ENCODE measurements at regions of chr4 and their contacts with region 1.

Region 1: DNA sequence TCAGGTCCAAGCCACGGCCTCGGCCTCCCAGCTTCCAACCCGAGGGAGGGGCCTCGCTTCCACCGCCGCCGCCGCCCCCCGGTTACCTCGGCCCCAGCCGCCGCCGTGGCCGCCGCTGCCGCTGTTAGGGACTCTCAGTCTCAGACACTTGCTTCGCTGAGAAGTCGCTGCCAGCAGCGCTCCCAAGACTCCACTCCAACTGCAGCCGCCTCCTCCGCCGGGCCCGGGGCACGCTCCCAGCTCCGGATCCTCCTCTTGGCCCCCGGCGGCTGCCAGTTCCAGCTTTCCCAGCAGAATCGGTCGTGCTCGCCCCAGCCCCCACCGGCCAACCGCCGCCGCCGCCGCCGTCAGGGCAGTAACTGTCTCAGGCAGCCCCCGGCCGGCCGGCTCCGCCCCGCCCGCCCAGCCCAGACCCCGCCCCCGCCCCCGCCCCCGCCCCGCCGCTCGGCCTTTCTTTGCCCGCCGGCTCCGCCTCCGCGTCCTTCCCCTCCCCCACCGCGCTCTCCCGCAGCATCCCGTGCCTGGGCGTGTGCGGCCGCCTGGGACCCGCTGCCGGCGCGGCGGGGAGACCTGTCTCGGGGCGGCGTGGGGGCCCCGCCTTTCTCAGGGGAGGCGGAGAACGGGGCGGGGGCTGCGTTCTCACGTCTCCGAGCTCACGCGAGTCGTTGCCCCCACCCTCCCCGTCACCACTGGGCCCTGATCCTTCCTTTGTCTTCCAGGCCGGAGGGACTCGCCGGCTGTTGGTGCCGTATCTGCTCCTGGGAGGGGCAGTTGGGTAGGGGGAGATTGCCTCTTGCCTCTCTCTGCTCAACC is at the start of gene ANKRD50:
- DNase-seq: peak; percentile 88
- H3K4me3 Mint-ChIP-seq: no peak within 1 kb of the TSS
- H3K27ac Mint-ChIP-seq: peak within 1 kb of the TSS; percentile 97
- H3K4me1 Mint-ChIP-seq: no peaks in the 10 kb centered on the region
- H3K27me3 Mint-ChIP-seq: no peaks in the 10 kb centered on the region
- CTCF ChIP-seq: no peak
- total RNA-seq, gene ANKRD50: 22.9 and 24.3 TPM in 2 replicates

Region 2: GRCh38 chr4:124427095-124427767 is 285.3 kb before region 1 on chr4:
- CTCF ChIA-PET with region 1: no interaction called
- intact Hi-C with region 1: loop called (anchors 10 kb)
- DNase-seq: peak; percentile 8
- H3K4me3 Mint-ChIP-seq: no peak overlapping the region
- H3K27ac Mint-ChIP-seq: peak overlapping the region; percentile 60
- H3K4me1 Mint-ChIP-seq: peaks cover 47% of the 10 kb centered on the region
- H3K27me3 Mint-ChIP-seq: no peaks in the 10 kb centered on the region
- CTCF ChIP-seq: no peak

Region 3: DNA sequence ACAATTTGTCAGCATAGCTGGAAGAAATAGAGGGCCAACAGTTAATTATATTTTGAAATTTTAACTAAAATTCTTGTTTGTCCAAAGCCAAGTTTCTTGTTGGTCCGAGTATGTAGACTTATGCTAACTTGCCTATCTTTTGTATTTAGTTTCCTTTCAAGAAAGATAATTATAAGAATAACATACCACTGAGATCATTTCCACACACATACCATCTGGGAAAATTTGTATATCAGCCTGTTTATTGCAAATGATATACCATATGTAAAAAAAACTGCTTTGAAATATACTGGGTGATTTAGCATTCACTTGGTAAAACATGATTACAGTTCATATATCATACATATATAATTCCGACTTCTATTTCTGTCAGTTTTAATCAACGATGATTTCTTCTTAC is 84.6 kb after region 1 on chr4:
- CTCF ChIA-PET with region 1: no interaction called
- intact Hi-C with region 1: no loop called
- DNase-seq: no peak
- H3K4me3 Mint-ChIP-seq: no peak overlapping the region
- H3K27ac Mint-ChIP-seq: no peak overlapping the region
- H3K4me1 Mint-ChIP-seq: no peaks in the 10 kb centered on the region
- H3K27me3 Mint-ChIP-seq: no peaks in the 10 kb centered on the region
- CTCF ChIP-seq: no peak

Region 4: GRCh38 chr4:124980276-124980752 is 267.7 kb after region 1 on chr4:
- CTCF ChIA-PET with region 1: no interaction called
- intact Hi-C with region 1: no loop called
- DNase-seq: no peak
- H3K4me3 Mint-ChIP-seq: no peak overlapping the region
- H3K27ac Mint-ChIP-seq: no peak overlapping the region
- H3K4me1 Mint-ChIP-seq: peaks cover 13% of the 10 kb centered on the region
- H3K27me3 Mint-ChIP-seq: no peaks in the 10 kb centered on the region
- CTCF ChIP-seq: no peak

Region 5: DNA sequence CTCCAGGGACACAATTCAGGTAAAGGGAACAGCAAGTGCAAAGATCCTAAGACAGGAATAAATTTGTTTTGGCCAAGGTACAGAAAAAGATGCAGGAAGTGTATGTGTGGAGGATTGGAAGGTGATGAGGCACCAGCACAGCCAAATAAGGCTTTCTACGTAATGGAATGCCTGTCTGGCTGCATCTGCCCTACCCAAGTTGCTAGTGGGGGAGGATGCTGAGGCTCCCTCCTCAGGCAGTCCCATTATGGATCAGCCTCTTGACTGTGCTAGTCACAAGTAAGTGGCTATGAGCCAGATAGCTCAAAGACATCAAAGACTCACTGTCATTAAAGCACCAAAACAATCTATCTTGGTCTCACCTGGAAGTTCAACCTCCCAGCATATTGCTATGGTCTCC is 301.3 kb after region 1 on chr4:
- CTCF ChIA-PET with region 1: no interaction called
- intact Hi-C with region 1: no loop called
- DNase-seq: no peak
- H3K4me3 Mint-ChIP-seq: no peak overlapping the region
- H3K27ac Mint-ChIP-seq: no peak overlapping the region
- H3K4me1 Mint-ChIP-seq: no peaks in the 10 kb centered on the region
- H3K27me3 Mint-ChIP-seq: no peaks in the 10 kb centered on the region
- CTCF ChIP-seq: no peak

Region 6: DNA sequence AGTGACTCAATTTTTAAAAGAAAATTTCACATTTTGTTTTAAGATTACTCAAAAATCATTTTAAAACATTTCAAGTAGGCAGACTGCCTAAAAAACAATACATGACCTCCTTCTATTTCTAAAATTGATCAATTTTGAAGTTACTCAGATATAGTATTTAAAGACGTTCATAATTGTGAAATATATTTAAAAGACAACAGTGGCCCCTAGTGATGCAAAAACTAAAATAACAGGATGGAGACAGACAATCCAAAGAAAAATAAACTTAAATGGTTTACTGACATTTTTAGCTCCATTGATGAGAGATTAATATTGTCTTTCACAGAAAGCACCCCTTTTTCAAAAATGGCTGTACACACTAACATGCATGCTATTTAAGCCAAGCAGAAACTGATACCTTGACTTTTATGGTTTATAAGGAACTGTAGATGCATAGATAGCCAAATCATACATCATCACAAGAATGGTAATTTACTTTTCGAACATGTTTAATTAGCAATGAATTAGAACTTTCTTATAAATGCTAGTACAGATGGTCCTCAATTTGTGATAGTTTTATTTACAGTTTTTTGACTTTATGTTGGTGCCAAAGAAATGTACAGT is 532.4 kb after region 1 on chr4:
- CTCF ChIA-PET with region 1: no interaction called
- intact Hi-C with region 1: loop called (anchors 5 kb)
- DNase-seq: no peak
- H3K4me3 Mint-ChIP-seq: no peak overlapping the region
- H3K27ac Mint-ChIP-seq: no peak overlapping the region
- H3K4me1 Mint-ChIP-seq: no peaks in the 10 kb centered on the region
- H3K27me3 Mint-ChIP-seq: no peaks in the 10 kb centered on the region
- CTCF ChIP-seq: no peak